ENCODE measurements at regions of chr17 and their contacts with region 1.

Region 1: DNA sequence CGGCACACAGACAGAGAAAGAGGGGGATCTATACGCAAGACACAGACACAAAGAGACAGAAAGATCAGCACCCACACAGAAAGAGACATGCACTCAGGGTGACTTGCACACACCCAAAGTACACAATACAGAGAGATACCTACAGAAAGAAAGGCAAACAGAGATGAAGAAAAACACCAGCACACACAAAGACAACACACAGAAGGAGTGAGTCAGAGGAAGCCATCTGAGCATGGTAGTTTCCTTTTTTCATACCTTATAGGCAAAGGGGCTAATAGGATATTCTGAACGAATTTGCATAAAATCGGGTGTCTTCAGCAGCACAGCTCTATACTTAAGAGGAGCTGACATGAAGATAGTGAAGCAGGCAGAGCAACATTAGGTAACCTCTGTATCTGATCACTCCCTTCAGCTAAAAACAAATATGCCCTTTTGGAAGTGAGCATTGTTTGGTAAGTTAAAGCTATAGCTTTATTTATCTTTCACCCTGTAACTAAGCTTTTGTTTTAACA is 198.6 kb downstream of the AATF start:
- DNase-seq: peak; percentile 70
- H3K4me3 Mint-ChIP-seq: peak overlapping the region; percentile 50
- H3K27ac Mint-ChIP-seq: peak overlapping the region; percentile 73
- H3K4me1 Mint-ChIP-seq: peaks cover 18% of the 10 kb centered on the region
- H3K27me3 Mint-ChIP-seq: no peaks in the 10 kb centered on the region

Region 2: GRCh38 chr17:37089956-37090355 is 57.4 kb before region 1 on chr17:
- intact Hi-C with region 1: loop called (anchors 10 kb)
- DNase-seq: peak; percentile 88
- H3K4me3 Mint-ChIP-seq: peak overlapping the region; percentile 66
- H3K27ac Mint-ChIP-seq: peak overlapping the region; percentile 90
- H3K4me1 Mint-ChIP-seq: peaks cover 49% of the 10 kb centered on the region
- H3K27me3 Mint-ChIP-seq: no peaks in the 10 kb centered on the region